Upper lobe of right lung (tissue), 1 donor: ENCODE measurements at regions of chr16 and their contacts with region 1.

Region 1: GRCh38 chr16:31440516-31441184 is 1.9 kb downstream of the ZNF843 start:
- DNase-seq: no peak
- ATAC-seq: no peak
- H3K4me3 ChIP-seq: no peak overlapping the region
- H3K27ac ChIP-seq: no peak overlapping the region
- H3K4me1 ChIP-seq: peaks cover 4% of the 10 kb centered on the region
- H3K27me3 ChIP-seq: no peaks in the 10 kb centered on the region
- CTCF ChIP-seq: no peak

Region 2: DNA sequence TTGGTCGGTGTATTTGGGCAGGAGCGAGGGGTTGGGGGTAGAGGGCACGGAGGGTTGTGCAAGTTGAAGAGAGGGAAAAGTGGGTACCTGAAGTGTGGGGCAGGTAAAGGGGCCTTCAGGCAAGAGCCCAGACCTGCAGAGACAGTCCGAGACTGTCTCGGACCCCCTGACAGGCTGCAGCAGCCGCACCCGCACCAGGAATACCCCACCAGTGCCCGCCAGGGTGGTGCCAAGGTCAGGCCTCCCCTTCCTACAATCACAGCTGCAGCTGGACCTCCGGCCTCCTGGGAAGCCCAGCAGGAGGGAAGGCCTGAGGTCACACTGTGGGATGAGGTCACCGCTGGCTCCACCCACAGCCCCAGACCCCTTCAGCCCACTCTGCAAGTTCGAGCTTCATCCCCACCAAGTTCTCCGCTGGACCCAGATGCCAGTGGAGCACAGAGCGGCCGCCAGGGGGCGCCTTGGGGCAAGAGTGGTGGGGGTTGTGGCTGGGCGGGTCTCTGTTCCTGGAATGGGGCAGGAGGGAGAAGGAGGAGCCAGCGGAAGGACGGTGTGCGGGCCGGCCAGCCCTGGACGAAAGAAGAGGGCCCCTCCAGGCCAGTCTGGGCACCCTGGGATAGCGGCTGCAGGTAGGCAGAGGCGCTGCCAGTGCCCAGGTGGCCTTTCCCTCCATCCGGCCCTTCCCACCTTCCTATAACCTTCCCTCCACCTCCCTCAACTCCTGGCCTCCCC is 455.8 kb before region 1 on chr16 and contains the start of gene HSD3B7:
- intact Hi-C with region 1: loop called (anchors 5 kb)
- DNase-seq: peak; percentile 95
- ATAC-seq: peak; percentile 95
- H3K4me3 ChIP-seq: peak within 1 kb of the TSS; percentile 51
- H3K27ac ChIP-seq: no peak within 1 kb of the TSS
- H3K4me1 ChIP-seq: peaks cover 10% of the 10 kb centered on the region
- H3K27me3 ChIP-seq: no peaks in the 10 kb centered on the region
- CTCF ChIP-seq: peak; percentile 93
- total RNA-seq, gene HSD3B7: 30.4 TPM

Region 3: DNA sequence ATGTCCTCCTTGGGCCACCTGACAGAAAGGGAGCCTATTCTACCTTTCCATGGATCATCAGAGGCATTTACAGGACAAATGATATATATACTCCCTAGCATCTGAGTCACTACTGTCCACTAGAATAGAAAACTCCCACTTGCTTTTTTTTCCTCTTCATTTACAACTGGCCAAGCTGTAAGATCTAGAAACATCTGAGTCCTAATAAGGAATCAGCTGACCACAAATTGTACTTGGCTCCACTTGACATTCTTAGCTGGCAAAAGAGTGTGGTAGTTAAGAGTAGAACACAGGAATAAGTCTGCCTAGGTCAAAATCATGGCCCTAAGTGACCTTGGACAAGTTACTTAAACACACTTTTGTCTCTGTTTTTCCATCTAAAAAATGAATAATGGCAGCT is 62.3 kb after region 1 on chr16:
- intact Hi-C with region 1: no loop called
- DNase-seq: no peak
- ATAC-seq: peak; percentile 74
- H3K4me3 ChIP-seq: no peak overlapping the region
- H3K27ac ChIP-seq: no peak overlapping the region
- H3K4me1 ChIP-seq: peaks cover 27% of the 10 kb centered on the region
- H3K27me3 ChIP-seq: no peaks in the 10 kb centered on the region
- CTCF ChIP-seq: no peak